ENCODE measurements at regions of chr12 and their contacts with region 1.

Region 1: GRCh38 chr12:4276524-4277204 is 3.1 kb downstream of the CCND2 start:
- DNase-seq: peak; percentile 84 to 91 (median 87)
- ATAC-seq: peak; percentile 44
- H3K4me3 ChIP-seq: no peak overlapping the region
- H3K4me1 ChIP-seq: peaks cover 55% of the 10 kb centered on the region
- CTCF ChIP-seq: peak; percentile 61

Region 2: GRCh38 chr12:3998968-3999826 is 277.5 kb before region 1 on chr12:
- intact Hi-C with region 1: loop called (anchors 2 to 5 kb)
- DNase-seq: peak in 1 of 3 donors; percentile 77
- ATAC-seq: peak; percentile 92
- H3K4me3 ChIP-seq: no peak overlapping the region
- H3K4me1 ChIP-seq: peaks cover 7% of the 10 kb centered on the region
- CTCF ChIP-seq: no peak

Region 3: GRCh38 chr12:4107436-4107878 is 169.2 kb before region 1 on chr12:
- intact Hi-C with region 1: loop called in 1 of 2 experiments (anchors 5 kb)
- DNase-seq: peak in 1 of 3 donors; percentile 88
- ATAC-seq: peak; percentile 96
- H3K4me3 ChIP-seq: no peak overlapping the region
- H3K4me1 ChIP-seq: no peaks in the 10 kb centered on the region
- CTCF ChIP-seq: peak; percentile 49